ENCODE measurements at regions of chr1 and their contacts with region 1.

Region 1: DNA sequence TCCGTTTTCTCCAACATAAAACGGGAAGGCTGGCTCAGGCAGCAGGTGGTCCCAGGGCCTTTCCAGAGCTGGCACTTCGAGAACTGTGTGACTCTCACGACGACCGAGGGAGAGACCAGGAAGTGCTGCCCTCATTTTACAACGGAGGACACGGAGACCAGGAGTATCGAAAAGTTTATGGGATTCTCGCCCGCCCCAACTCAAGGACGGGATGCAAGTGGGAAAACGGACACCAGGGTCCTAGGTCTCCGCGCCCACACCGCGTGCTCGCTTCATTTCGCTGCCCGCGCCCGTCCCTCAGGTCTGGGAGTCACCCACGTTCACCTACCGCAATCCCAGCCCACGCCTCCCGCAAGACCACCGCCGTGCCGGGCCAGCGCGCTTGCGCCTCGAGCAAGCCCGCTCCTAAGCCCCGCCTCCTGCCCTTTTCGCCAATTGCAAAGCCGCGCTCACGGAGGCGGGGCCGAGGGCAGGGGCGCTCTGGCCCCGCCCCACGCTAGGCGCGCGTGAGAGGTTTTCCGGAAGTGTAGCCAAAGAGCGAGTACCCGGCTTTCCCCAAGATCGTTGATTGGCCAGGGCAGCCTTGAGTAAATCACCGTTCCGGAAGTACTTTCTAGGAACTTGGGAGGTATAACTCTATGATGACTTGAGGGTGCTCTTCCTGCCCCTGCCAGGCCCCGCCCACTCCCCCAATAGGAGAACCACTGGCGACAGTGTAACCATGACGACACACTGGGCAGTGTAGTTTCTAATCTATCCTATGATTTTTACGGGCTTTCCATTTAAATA is at the start of gene PARS2:
- DNase-seq: peak; percentile 94 to 96
- ATAC-seq: peak; percentile 100
- H3K4me3 ChIP-seq: peak within 1 kb of the TSS; percentile 75 to 84 (median 82)
- H3K27ac ChIP-seq: peak within 1 kb of the TSS; percentile 79 to 85 (median 84)
- H3K4me1 ChIP-seq: peaks cover 6 to 9% of the 10 kb centered on the region in 2 donors
- H3K27me3 ChIP-seq: no peaks in the 10 kb centered on the region
- CTCF ChIP-seq: no peak
- POLR2A ChIP-seq: peak; percentile 77 to 79
- total RNA-seq, gene PARS2: 4.7 to 8.4 (median 4.9) TPM

Region 2: GRCh38 chr1:53837924-53838652 is 926.2 kb before region 1 on chr1 and contains the start of gene NDC1:
- in situ Hi-C with region 1: no loop called
- intact Hi-C with region 1: loop called (anchors 1 kb)
- DNase-seq: peak; percentile 86 to 89
- ATAC-seq: peak; percentile 99 to 100
- H3K4me3 ChIP-seq: peak within 1 kb of the TSS; percentile 76 to 89 (median 86)
- H3K27ac ChIP-seq: peak within 1 kb of the TSS; percentile 93 to 99 (median 96)
- H3K4me1 ChIP-seq: peaks cover 13 to 16% of the 10 kb centered on the region in 2 donors
- H3K27me3 ChIP-seq: no peaks in the 10 kb centered on the region
- CTCF ChIP-seq: peak in 4 of 5 experiments; percentile 22 to 42 (median 33)
- POLR2A ChIP-seq: peak; percentile 53 to 70
- total RNA-seq, gene NDC1: 7.6 to 27.0 (median 9.5) TPM

Region 3: DNA sequence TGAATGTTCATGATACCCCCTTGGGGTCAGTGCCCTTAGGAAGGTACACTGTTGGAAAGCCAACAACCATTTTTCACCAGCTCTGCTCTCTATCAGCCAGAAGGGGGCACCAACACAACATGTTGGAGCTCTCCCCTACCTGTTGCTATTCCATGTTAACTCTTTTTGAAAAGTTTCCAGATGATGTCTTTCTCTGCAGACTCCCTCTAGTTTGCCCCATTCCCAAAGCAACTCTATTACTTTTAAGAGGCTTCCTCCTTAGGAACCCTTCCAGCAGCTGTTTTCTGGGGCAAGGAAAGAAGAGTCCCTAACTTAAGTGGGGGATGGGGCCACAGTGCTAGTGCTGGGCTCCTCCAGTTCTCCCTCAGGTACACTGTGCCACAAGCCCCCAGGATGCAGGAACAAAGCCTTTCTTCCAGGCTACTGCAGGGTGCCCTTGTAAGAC is 903.3 kb before region 1 on chr1:
- in situ Hi-C with region 1: loop called in 1 of 4 experiments (anchors 25 kb)
- intact Hi-C with region 1: no loop called
- DNase-seq: no peak
- ATAC-seq: peak in 1 of 2 donors; percentile 39
- H3K4me3 ChIP-seq: no peak overlapping the region
- H3K27ac ChIP-seq: no peak overlapping the region
- H3K4me1 ChIP-seq: no peaks in the 10 kb centered on the region
- H3K27me3 ChIP-seq: no peaks in the 10 kb centered on the region
- CTCF ChIP-seq: peak; percentile 15 to 69 (median 44)
- POLR2A ChIP-seq: no peak

Region 4: GRCh38 chr1:54052934-54053744 is 711.2 kb before region 1 on chr1 and contains the starts of genes TCEANC2 and TMEM59:
- in situ Hi-C with region 1: loop called in 1 of 4 experiments (anchors 25 kb)
- intact Hi-C with region 1: no loop called
- DNase-seq: peak; percentile 97 to 98
- ATAC-seq: peak; percentile 93 to 94
- H3K4me3 ChIP-seq: peak within 1 kb of the TSS; percentile 82 to 99 (median 96)
- H3K27ac ChIP-seq: peak within 1 kb of the TSS; percentile 98 to 99 (median 98)
- H3K4me1 ChIP-seq: peaks cover 49% of the 10 kb centered on the region in 2 donors
- H3K27me3 ChIP-seq: no peaks in the 10 kb centered on the region
- CTCF ChIP-seq: peak in 1 of 5 experiments; percentile 10
- POLR2A ChIP-seq: peak; percentile 80 to 85
- total RNA-seq, gene TCEANC2: 2.6 to 9.5 (median 7.0) TPM
- total RNA-seq, gene TMEM59: 156 to 248 (median 224) TPM

Region 5: DNA sequence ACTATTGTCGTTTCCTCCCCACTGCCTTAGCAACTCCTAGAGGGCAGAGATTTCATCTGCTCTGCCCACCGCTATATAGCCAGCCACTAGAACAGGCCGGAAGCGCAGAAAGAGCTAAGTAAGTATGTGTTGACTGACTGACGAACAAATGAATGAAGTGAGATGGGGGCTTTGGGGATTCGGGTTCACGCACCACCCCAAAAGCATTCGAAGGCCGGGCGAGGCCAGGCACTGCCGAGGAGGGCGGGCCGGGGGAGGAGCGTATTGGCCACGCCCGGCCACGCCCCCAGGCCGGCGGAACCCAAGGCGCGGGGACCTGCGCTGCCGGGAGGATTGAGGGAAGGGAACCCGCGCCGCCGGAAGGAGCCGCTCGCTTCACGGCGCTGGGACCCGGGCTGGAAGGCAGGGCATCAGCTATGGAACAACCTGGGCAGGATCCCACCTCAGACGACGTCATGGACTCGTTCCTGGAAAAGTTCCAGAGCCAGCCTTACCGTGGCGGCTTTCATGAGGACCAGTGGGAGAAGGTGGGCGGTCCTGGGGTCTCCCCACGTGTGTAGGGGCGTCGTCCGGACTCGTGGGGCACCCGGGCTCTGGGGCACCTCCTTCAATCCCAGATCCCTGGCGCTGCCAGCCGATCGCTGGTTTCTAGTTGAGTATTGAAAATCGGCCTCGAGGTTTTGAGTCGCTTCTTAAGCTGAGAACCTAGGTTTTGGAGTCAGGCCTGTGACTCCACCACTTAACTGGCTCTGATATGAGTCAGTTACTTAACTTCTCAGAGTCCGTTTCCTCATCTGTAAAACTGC is 48.6 kb before region 1 on chr1 and contains the start of gene TTC4:
- in situ Hi-C with region 1: no loop called
- intact Hi-C with region 1: loop called (anchors 1 kb)
- DNase-seq: peak; percentile 59 to 72
- ATAC-seq: peak; percentile 92 to 95
- H3K4me3 ChIP-seq: peak within 1 kb of the TSS; percentile 91 to 98 (median 97)
- H3K27ac ChIP-seq: peak within 1 kb of the TSS; percentile 88 to 94 (median 90)
- H3K4me1 ChIP-seq: peaks cover 12 to 15% of the 10 kb centered on the region in 2 donors
- H3K27me3 ChIP-seq: no peaks in the 10 kb centered on the region
- CTCF ChIP-seq: no peak
- POLR2A ChIP-seq: peak; percentile 77 to 79
- total RNA-seq, gene TTC4: 26.7 to 44.3 (median 31.4) TPM

Region 6: GRCh38 chr1:54774820-54775498 is 10.6 kb after region 1 on chr1:
- in situ Hi-C with region 1: no loop called
- intact Hi-C with region 1: no loop called
- DNase-seq: no peak
- ATAC-seq: no peak
- H3K4me3 ChIP-seq: no peak overlapping the region
- H3K27ac ChIP-seq: no peak overlapping the region
- H3K4me1 ChIP-seq: no peaks in the 10 kb centered on the region
- H3K27me3 ChIP-seq: peaks cover 0 to 2% (median 0%) of the 10 kb centered on the region in 3 donors
- CTCF ChIP-seq: no peak
- POLR2A ChIP-seq: no peak

Region 7: GRCh38 chr1:54886724-54887664 is 122.7 kb after region 1 on chr1 and contains the start of gene DHCR24:
- in situ Hi-C with region 1: no loop called
- intact Hi-C with region 1: loop called (anchors 5 kb)
- DNase-seq: peak; percentile 82 to 83
- ATAC-seq: peak; percentile 62 to 75
- H3K4me3 ChIP-seq: peak within 1 kb of the TSS; percentile 81 to 99 (median 86)
- H3K27ac ChIP-seq: peak within 1 kb of the TSS; percentile 84 to 93 (median 88)
- H3K4me1 ChIP-seq: peaks cover 34 to 44% of the 10 kb centered on the region in 2 donors
- H3K27me3 ChIP-seq: no peaks in the 10 kb centered on the region
- CTCF ChIP-seq: no peak
- POLR2A ChIP-seq: peak; percentile 89 to 93
- total RNA-seq, gene DHCR24: 155 to 362 (median 207) TPM